Endothelial cell of umbilical vein (primary cell): ENCODE measurements at regions of chr16 and their contacts with region 1.

Region 1: GRCh38 chr16:75402821-75403475 is 30.4 kb downstream of the CFDP1 start:
- DNase-seq: peak; percentile 74
- H3K4me3 ChIP-seq: no peak overlapping the region
- H3K27ac ChIP-seq: peak overlapping the region; percentile 89
- H3K4me1 ChIP-seq: peaks cover 13% of the 10 kb centered on the region
- H3K27me3 ChIP-seq: no peaks in the 10 kb centered on the region
- CTCF ChIP-seq: peak; percentile 41 to 42
- POLR2A ChIP-seq: no peak

Region 2: GRCh38 chr16:75227361-75228142 is 175.4 kb before region 1 on chr16:
- CTCF ChIA-PET with region 1: interaction called, 84 read pairs
- POLR2A ChIA-PET with region 1: no interaction called
- dilution Hi-C with region 1: no loop called
- intact Hi-C with region 1: no loop called
- DNase-seq: peak; percentile 24
- H3K4me3 ChIP-seq: no peak overlapping the region
- H3K27ac ChIP-seq: no peak overlapping the region
- H3K4me1 ChIP-seq: no peaks in the 10 kb centered on the region
- H3K27me3 ChIP-seq: no peaks in the 10 kb centered on the region
- CTCF ChIP-seq: no peak
- POLR2A ChIP-seq: peak; percentile 53

Region 3: DNA sequence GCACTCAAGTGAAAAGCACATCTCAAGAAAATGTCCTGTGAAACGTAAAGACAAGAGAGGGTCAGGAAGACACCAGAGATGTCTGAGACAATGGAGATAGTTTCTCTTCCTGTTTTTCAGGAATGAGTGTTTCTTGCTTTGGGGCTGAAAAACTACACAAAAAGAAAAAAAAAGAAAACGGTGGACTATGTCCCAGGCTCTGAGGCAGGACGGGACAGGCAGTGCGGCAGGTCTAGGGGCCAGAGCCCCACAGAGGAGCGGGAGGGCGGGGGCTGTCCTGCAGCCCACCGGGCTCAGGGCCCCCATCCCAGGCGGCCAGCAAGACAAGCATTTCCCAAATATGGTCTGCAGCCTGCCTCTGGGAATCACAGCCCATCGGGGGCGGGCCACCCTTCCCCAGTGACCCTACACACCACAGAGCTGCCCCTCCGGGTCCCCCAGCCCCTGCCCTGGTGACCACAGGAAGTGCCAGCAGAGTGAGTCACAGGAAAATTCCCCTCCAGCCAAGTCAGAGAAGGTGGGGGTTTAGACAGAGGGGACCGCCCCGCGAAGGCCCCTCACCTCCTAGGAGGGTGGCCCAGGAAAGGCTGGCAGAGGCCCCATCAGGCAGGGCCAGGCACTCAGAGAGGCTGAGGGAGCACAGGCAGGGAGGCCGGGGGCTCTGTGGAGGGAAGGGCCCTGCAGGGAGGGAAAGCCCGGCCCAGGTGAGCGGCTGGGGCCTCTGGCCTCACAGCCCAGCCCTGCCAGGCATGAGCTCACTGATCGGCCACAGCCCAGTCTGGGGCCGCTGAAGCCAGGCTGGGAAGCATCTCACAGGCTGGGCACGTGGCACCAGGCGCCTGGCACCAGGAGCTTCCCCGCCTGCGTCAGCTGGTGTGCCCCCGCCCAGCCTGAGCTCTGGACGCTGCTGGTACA is 157.8 kb before region 1 on chr16:
- CTCF ChIA-PET with region 1: interaction called, 10 read pairs
- POLR2A ChIA-PET with region 1: no interaction called
- dilution Hi-C with region 1: no loop called
- intact Hi-C with region 1: loop called (anchors 2 kb)
- DNase-seq: peak; percentile 94
- H3K4me3 ChIP-seq: peak overlapping the region in 1 of 3 experiments; percentile 5
- H3K27ac ChIP-seq: peak overlapping the region; percentile 92
- H3K4me1 ChIP-seq: peaks cover 66% of the 10 kb centered on the region
- H3K27me3 ChIP-seq: no peaks in the 10 kb centered on the region
- CTCF ChIP-seq: no peak
- POLR2A ChIP-seq: peak; percentile 74

Region 4: GRCh38 chr16:75379911-75380847 is 22.8 kb before region 1 on chr16:
- CTCF ChIA-PET with region 1: interaction called, 21 read pairs
- POLR2A ChIA-PET with region 1: no interaction called
- dilution Hi-C with region 1: no loop called
- intact Hi-C with region 1: no loop called
- DNase-seq: peak; percentile 17
- H3K4me3 ChIP-seq: no peak overlapping the region
- H3K27ac ChIP-seq: peak overlapping the region; percentile 59
- H3K4me1 ChIP-seq: peaks cover 55% of the 10 kb centered on the region
- H3K27me3 ChIP-seq: no peaks in the 10 kb centered on the region
- CTCF ChIP-seq: no peak
- POLR2A ChIP-seq: no peak

Region 5: GRCh38 chr16:75415169-75415905 is 12.4 kb after region 1 on chr16:
- CTCF ChIA-PET with region 1: interaction called, 13 read pairs
- POLR2A ChIA-PET with region 1: no interaction called
- dilution Hi-C with region 1: no loop called
- intact Hi-C with region 1: no loop called
- DNase-seq: no peak
- H3K4me3 ChIP-seq: no peak overlapping the region
- H3K27ac ChIP-seq: no peak overlapping the region
- H3K4me1 ChIP-seq: peaks cover 7% of the 10 kb centered on the region
- H3K27me3 ChIP-seq: no peaks in the 10 kb centered on the region
- CTCF ChIP-seq: no peak
- POLR2A ChIP-seq: no peak

Region 6: GRCh38 chr16:75733305-75734211 is 330.6 kb after region 1 on chr16:
- CTCF ChIA-PET with region 1: no interaction called
- POLR2A ChIA-PET with region 1: no interaction called
- dilution Hi-C with region 1: no loop called
- intact Hi-C with region 1: no loop called
- DNase-seq: no peak
- H3K4me3 ChIP-seq: no peak overlapping the region
- H3K27ac ChIP-seq: no peak overlapping the region
- H3K4me1 ChIP-seq: no peaks in the 10 kb centered on the region
- H3K27me3 ChIP-seq: no peaks in the 10 kb centered on the region
- CTCF ChIP-seq: no peak
- POLR2A ChIP-seq: no peak